CD8-positive, alpha-beta T cell (primary cell): ENCODE measurements at regions of chrX and their contacts with region 1.

Region 1: DNA sequence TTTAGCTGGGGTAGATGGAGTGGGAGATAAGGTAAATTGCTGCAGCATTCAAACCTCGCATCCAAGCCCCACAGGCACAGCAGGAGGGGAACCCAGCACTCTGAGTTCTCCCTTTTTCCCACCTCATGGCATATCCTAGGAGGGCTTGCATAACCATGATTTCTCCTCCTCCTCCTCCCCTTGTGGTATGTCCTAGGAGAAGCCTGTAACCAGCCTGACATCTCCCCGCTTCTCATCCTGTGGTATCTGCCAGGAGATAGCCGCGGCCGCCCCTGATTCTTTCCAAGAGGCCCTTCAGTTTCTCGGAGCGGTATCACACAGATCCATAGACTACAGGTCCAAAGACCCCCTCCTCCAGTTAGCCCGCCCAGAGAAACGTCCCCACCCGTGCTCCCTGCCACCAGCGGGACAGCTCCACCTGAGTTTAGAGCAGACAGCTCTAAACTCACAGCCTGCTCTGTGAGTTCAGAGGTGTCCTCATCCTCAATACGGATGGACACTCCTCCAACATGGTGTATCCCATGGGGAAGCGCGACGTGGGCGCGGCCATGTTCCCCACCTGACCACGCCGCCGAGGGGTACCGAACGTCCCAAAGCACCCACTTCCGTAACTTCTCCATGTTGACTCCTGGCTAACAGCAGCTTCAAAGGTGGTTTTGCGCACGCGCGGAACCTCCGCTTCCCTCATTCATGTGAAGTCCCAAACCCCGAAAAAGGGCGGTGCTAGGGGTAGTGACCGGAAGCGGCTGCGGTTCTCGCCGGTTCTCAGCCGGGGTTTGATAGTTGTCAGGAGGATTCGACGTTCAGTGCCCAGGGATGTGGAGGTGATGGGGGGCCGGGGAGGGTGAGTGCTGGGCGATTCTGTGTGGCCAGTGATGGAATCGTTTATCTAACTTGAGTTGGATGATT is at the start of gene ZNF81:
- DNase-seq: peak; percentile 80 to 95 (median 91)
- ATAC-seq: peak; percentile 96
- H3K4me3 ChIP-seq: peak within 1 kb of the TSS; percentile 74 to 75
- H3K4me3 Mint-ChIP-seq: peak within 1 kb of the TSS; percentile 98
- H3K27ac ChIP-seq: peak within 1 kb of the TSS; percentile 65 to 75
- H3K27ac Mint-ChIP-seq: peak within 1 kb of the TSS; percentile 97
- H3K4me1 ChIP-seq: peaks cover 14% of the 10 kb centered on the region
- H3K4me1 Mint-ChIP-seq: peaks cover 27% of the 10 kb centered on the region
- H3K27me3 ChIP-seq: no peaks in the 10 kb centered on the region
- H3K27me3 Mint-ChIP-seq: no peaks in the 10 kb centered on the region
- CTCF ChIP-seq: no peak
- total RNA-seq, gene ZNF81: 6.1 to 7.2 TPM

Region 2: GRCh38 chrX:46545111-46546005 is 1291.1 kb before region 1 on chrX and contains the start of gene ZNF674:
- CTCF ChIA-PET with region 1: no interaction called
- POLR2A ChIA-PET with region 1: no interaction called
- intact Hi-C with region 1: loop called in 1 of 2 experiments (anchors 10 kb)
- DNase-seq: peak; percentile 87 to 97 (median 93)
- ATAC-seq: peak; percentile 91
- H3K4me3 ChIP-seq: peak within 1 kb of the TSS; percentile 93
- H3K4me3 Mint-ChIP-seq: peak within 1 kb of the TSS; percentile 93
- H3K27ac ChIP-seq: peak within 1 kb of the TSS; percentile 89 to 91
- H3K27ac Mint-ChIP-seq: peak within 1 kb of the TSS; percentile 97
- H3K4me1 ChIP-seq: peaks cover 22% of the 10 kb centered on the region
- H3K4me1 Mint-ChIP-seq: peaks cover 29% of the 10 kb centered on the region
- H3K27me3 ChIP-seq: no peaks in the 10 kb centered on the region
- H3K27me3 Mint-ChIP-seq: no peaks in the 10 kb centered on the region
- CTCF ChIP-seq: no peak
- total RNA-seq, gene ZNF674: 0.50 to 1.1 TPM

Region 3: DNA sequence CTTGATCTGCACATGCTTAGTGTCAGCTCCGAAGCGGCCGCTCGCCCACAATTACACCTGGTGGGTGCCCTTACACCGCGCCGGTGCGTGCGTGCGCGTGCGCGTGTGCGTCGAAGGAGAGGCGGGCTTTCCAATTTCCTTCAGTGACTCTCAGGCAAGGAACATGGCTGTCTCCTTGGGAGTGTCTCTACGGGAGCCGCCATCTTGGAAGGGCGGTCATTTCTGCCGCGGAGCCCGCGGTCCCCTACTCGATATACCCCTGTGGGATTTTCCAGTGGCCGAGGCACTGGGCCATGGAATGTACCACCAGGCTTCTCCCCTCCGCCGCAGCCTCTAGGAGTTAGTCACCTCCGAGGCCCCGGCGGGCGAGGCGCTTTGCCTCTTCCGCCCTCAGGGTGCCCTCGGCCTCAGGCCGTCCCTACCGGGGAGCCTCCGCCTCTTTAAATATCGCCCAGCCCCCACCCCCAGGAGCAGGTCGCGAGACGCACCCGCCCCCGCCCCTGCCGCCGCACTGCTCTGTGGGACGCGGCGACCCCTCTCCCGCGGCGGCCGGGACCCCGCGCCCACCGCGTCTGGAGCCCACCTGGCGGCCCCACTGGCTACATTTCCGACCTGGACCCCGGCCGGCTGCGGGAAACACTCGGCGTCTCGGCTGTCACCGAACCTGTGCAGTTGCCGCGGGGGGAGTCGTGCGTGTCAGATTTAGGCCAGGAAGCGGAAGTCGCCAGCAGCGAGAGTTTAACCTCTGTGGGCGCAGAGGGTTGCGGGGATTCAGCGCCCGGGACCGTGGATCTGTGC is 353.7 kb before region 1 on chrX and contains the start of gene ZNF41:
- CTCF ChIA-PET with region 1: no interaction called
- POLR2A ChIA-PET with region 1: no interaction called
- intact Hi-C with region 1: loop called in 1 of 2 experiments (anchors 10 kb)
- DNase-seq: peak; percentile 60 to 92 (median 79)
- ATAC-seq: peak; percentile 83
- H3K4me3 ChIP-seq: peak within 1 kb of the TSS; percentile 81 to 86
- H3K4me3 Mint-ChIP-seq: peak within 1 kb of the TSS; percentile 94
- H3K27ac ChIP-seq: peak within 1 kb of the TSS; percentile 81 to 88
- H3K27ac Mint-ChIP-seq: peak within 1 kb of the TSS; percentile 99
- H3K4me1 ChIP-seq: peaks cover 18% of the 10 kb centered on the region
- H3K4me1 Mint-ChIP-seq: peaks cover 42% of the 10 kb centered on the region
- H3K27me3 ChIP-seq: no peaks in the 10 kb centered on the region
- H3K27me3 Mint-ChIP-seq: no peaks in the 10 kb centered on the region
- CTCF ChIP-seq: no peak
- total RNA-seq, gene ZNF41: 2.9 to 4.9 TPM

Region 4: GRCh38 chrX:47658684-47659515 is 177.5 kb before region 1 on chrX and contains the start of gene UXT:
- CTCF ChIA-PET with region 1: interaction called, 3 read pairs
- POLR2A ChIA-PET with region 1: no interaction called
- intact Hi-C with region 1: loop called (anchors 5 kb)
- DNase-seq: peak; percentile 80 to 95 (median 91)
- ATAC-seq: peak; percentile 81
- H3K4me3 ChIP-seq: peak within 1 kb of the TSS; percentile 86 to 92
- H3K4me3 Mint-ChIP-seq: peak within 1 kb of the TSS; percentile 90
- H3K27ac ChIP-seq: peak within 1 kb of the TSS; percentile 100
- H3K27ac Mint-ChIP-seq: peak within 1 kb of the TSS; percentile 99
- H3K4me1 ChIP-seq: peaks cover 16% of the 10 kb centered on the region
- H3K4me1 Mint-ChIP-seq: peaks cover 15% of the 10 kb centered on the region
- H3K27me3 ChIP-seq: no peaks in the 10 kb centered on the region
- H3K27me3 Mint-ChIP-seq: no peaks in the 10 kb centered on the region
- CTCF ChIP-seq: no peak
- total RNA-seq, gene UXT: 202 TPM

Region 5: GRCh38 chrX:47879463-47879862 is 43.0 kb after region 1 on chrX:
- CTCF ChIA-PET with region 1: no interaction called
- POLR2A ChIA-PET with region 1: no interaction called
- intact Hi-C with region 1: no loop called
- DNase-seq: no peak
- ATAC-seq: no peak
- H3K4me3 ChIP-seq: no peak overlapping the region
- H3K4me3 Mint-ChIP-seq: no peak overlapping the region
- H3K27ac ChIP-seq: no peak overlapping the region
- H3K27ac Mint-ChIP-seq: no peak overlapping the region
- H3K4me1 ChIP-seq: no peaks in the 10 kb centered on the region
- H3K4me1 Mint-ChIP-seq: no peaks in the 10 kb centered on the region
- H3K27me3 ChIP-seq: no peaks in the 10 kb centered on the region
- H3K27me3 Mint-ChIP-seq: no peaks in the 10 kb centered on the region
- CTCF ChIP-seq: no peak

Region 6: DNA sequence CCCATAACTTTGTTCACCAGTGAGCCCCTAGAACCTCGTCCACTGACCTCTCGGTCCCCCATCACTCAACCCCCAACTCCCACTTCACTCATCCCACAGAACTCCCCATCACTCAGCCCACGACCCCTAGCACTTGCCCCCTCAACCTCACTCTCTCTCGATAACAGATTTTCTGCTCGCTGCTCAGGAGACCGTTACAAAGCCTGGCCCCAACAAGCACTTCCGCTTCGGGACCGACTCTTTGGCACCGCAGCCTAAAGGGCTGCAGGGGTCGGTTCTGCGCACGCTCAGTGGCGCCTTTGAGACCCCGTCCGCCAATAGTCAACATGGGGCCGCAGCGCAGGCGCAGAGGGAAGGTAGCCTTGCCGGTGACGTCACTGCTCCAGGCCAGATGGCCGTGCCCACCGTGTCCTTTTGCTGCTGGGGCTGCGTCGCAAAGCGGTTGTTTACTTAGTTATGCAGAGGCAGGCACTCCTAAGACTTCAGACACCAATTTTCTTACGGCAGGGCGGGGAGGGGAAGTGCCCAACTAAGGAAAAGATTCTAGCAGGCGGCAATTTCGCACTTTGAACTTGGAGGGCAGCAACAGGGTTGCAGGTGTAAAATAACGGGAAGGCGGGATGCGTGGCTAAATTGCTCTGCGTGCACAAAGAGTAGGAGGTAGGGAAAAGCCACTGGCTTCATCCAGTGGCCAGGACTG is 167.5 kb after region 1 on chrX and contains the start of gene ZNF182:
- CTCF ChIA-PET with region 1: no interaction called
- POLR2A ChIA-PET with region 1: no interaction called
- intact Hi-C with region 1: loop called in 1 of 2 experiments (anchors 5 kb)
- DNase-seq: peak; percentile 84 to 96 (median 92)
- ATAC-seq: peak; percentile 92
- H3K4me3 ChIP-seq: peak within 1 kb of the TSS; percentile 72 to 81
- H3K4me3 Mint-ChIP-seq: peak within 1 kb of the TSS; percentile 99
- H3K27ac ChIP-seq: peak within 1 kb of the TSS; percentile 86 to 91
- H3K27ac Mint-ChIP-seq: peak within 1 kb of the TSS; percentile 100
- H3K4me1 ChIP-seq: peaks cover 7% of the 10 kb centered on the region
- H3K4me1 Mint-ChIP-seq: peaks cover 32% of the 10 kb centered on the region
- H3K27me3 ChIP-seq: no peaks in the 10 kb centered on the region
- H3K27me3 Mint-ChIP-seq: no peaks in the 10 kb centered on the region
- CTCF ChIP-seq: no peak
- total RNA-seq, gene ZNF182: 5.0 to 5.3 TPM

Region 7: GRCh38 chrX:48028091-48028490 is 191.7 kb after region 1 on chrX:
- CTCF ChIA-PET with region 1: interaction called, 57 read pairs
- POLR2A ChIA-PET with region 1: no interaction called
- intact Hi-C with region 1: loop called (anchors 1 kb)
- DNase-seq: peak in 1 of 9 experiments; percentile 34
- ATAC-seq: no peak
- H3K4me3 ChIP-seq: no peak overlapping the region
- H3K4me3 Mint-ChIP-seq: no peak overlapping the region
- H3K27ac ChIP-seq: no peak overlapping the region
- H3K27ac Mint-ChIP-seq: no peak overlapping the region
- H3K4me1 ChIP-seq: no peaks in the 10 kb centered on the region
- H3K4me1 Mint-ChIP-seq: peaks cover 8% of the 10 kb centered on the region
- H3K27me3 ChIP-seq: no peaks in the 10 kb centered on the region
- H3K27me3 Mint-ChIP-seq: no peaks in the 10 kb centered on the region
- CTCF ChIP-seq: no peak

Region 8: GRCh38 chrX:49269010-49269767 is 1432.8 kb after region 1 on chrX:
- CTCF ChIA-PET with region 1: no interaction called
- POLR2A ChIA-PET with region 1: no interaction called
- intact Hi-C with region 1: loop called in 1 of 2 experiments (anchors 10 kb)
- DNase-seq: peak; percentile 84 to 98 (median 91)
- ATAC-seq: peak; percentile 84
- H3K4me3 ChIP-seq: peak overlapping the region; percentile 71 to 84
- H3K4me3 Mint-ChIP-seq: peak overlapping the region; percentile 94
- H3K27ac ChIP-seq: peak overlapping the region; percentile 100
- H3K27ac Mint-ChIP-seq: peak overlapping the region; percentile 100
- H3K4me1 ChIP-seq: peaks cover 44% of the 10 kb centered on the region
- H3K4me1 Mint-ChIP-seq: peaks cover 50% of the 10 kb centered on the region
- H3K27me3 ChIP-seq: no peaks in the 10 kb centered on the region
- H3K27me3 Mint-ChIP-seq: no peaks in the 10 kb centered on the region
- CTCF ChIP-seq: no peak